Mammary epithelial cell (primary cell): ENCODE measurements at regions of chr1 and their contacts with region 1.

Region 1: GRCh38 chr1:76154206-76154956 is 79.8 kb downstream of the ST6GALNAC3 start:
- DNase-seq: peak; percentile 55
- H3K4me3 ChIP-seq: peak overlapping the region in 2 of 3 experiments; percentile 33 to 41
- H3K27ac ChIP-seq: no peak overlapping the region
- H3K4me1 ChIP-seq: peaks cover 4% of the 10 kb centered on the region
- H3K27me3 ChIP-seq: no peaks in the 10 kb centered on the region
- CTCF ChIP-seq: peak; percentile 97 to 98

Region 2: DNA sequence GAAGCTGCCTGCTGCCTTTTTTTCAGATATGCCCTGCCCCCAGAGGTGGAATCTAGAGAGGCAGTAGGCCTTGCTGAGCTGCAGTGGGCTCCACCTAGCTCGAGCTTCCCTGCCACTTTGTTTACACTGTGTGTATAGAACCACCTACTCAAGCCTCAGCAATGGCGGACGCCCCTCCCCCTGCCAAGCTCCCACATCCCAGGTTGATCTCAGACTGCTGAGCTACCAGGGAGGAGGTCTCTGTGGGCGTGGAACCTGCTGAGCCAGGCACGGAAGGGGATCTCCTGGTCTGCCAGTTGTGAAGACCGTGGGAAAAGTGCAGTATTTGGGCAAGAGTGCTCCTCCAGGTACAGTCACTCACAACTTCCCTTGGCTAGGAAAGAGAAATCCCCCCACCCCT is 292.6 kb before region 1 on chr1:
- CTCF ChIA-PET with region 1: no interaction called
- dilution Hi-C with region 1: no loop called
- in situ Hi-C with region 1: no loop called
- intact Hi-C with region 1: no loop called
- DNase-seq: peak; percentile 12
- H3K4me3 ChIP-seq: no peak overlapping the region
- H3K27ac ChIP-seq: no peak overlapping the region
- H3K4me1 ChIP-seq: no peaks in the 10 kb centered on the region
- H3K27me3 ChIP-seq: no peaks in the 10 kb centered on the region
- CTCF ChIP-seq: no peak

Region 3: DNA sequence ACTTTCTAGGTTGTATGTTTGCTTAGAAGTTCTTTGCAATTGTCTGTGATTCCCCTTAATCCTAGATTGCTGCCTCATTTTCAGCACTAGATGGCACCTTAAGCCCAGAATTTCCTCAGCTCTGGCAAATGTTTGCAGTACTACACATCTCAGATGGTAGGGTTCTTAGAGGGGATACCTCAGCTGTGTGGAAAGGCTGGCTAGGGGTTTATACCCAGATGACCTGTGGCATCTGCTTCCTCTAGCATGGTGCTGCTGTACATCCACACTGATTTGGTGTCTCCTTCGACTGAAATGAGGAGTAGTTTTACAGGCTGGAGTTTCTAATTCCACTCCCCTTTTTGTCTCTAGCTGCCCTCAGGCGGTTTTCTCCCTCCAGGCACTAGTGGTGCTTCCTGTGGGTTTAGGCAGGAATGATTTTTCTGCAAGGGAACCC is 245.6 kb before region 1 on chr1:
- CTCF ChIA-PET with region 1: no interaction called
- dilution Hi-C with region 1: no loop called
- in situ Hi-C with region 1: no loop called
- intact Hi-C with region 1: loop called (anchors 1 kb)
- DNase-seq: peak; percentile 53
- H3K4me3 ChIP-seq: no peak overlapping the region
- H3K27ac ChIP-seq: no peak overlapping the region
- H3K4me1 ChIP-seq: no peaks in the 10 kb centered on the region
- H3K27me3 ChIP-seq: no peaks in the 10 kb centered on the region
- CTCF ChIP-seq: peak; percentile 49 to 74

Region 4: DNA sequence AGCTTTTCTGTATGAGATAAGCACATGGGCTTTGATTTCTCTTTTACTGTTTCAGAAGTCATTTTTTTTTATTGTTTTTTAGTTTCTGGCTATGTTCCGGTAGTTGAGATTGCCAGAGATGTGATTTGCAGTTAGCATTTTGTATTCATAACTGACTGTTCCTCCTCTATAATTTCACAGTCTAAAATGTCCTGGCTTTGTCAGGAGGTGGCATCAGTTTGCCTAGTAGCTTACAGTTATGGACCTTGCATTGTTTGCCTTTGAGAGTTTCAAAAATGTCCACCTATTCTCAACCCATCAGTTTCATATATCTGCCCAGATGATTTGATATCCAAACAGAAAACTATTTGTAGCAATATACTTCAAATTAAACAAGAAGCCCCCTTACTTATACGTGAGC is 119.3 kb before region 1 on chr1:
- CTCF ChIA-PET with region 1: no interaction called
- dilution Hi-C with region 1: no loop called
- in situ Hi-C with region 1: no loop called
- intact Hi-C with region 1: loop called (anchors 10 kb)
- DNase-seq: no peak
- H3K4me3 ChIP-seq: no peak overlapping the region
- H3K27ac ChIP-seq: no peak overlapping the region
- H3K4me1 ChIP-seq: no peaks in the 10 kb centered on the region
- H3K27me3 ChIP-seq: peaks cover 1% of the 10 kb centered on the region
- CTCF ChIP-seq: peak in 1 of 2 donors; percentile 38

Region 5: GRCh38 chr1:76219366-76219818 is 65.0 kb after region 1 on chr1:
- CTCF ChIA-PET with region 1: no interaction called
- dilution Hi-C with region 1: no loop called
- in situ Hi-C with region 1: no loop called
- intact Hi-C with region 1: no loop called
- DNase-seq: no peak
- H3K4me3 ChIP-seq: no peak overlapping the region
- H3K27ac ChIP-seq: no peak overlapping the region
- H3K4me1 ChIP-seq: no peaks in the 10 kb centered on the region
- H3K27me3 ChIP-seq: no peaks in the 10 kb centered on the region
- CTCF ChIP-seq: no peak

Region 6: GRCh38 chr1:76379506-76379905 is 225.1 kb after region 1 on chr1:
- CTCF ChIA-PET with region 1: no interaction called
- dilution Hi-C with region 1: no loop called
- in situ Hi-C with region 1: no loop called
- intact Hi-C with region 1: loop called (anchors 5 kb)
- DNase-seq: no peak
- H3K4me3 ChIP-seq: no peak overlapping the region
- H3K27ac ChIP-seq: no peak overlapping the region
- H3K4me1 ChIP-seq: no peaks in the 10 kb centered on the region
- H3K27me3 ChIP-seq: no peaks in the 10 kb centered on the region
- CTCF ChIP-seq: no peak

Region 7: GRCh38 chr1:77126307-77126706 is 971.9 kb after region 1 on chr1:
- CTCF ChIA-PET with region 1: no interaction called
- dilution Hi-C with region 1: no loop called
- in situ Hi-C with region 1: loop called in 1 of 2 experiments (anchors 25 kb)
- intact Hi-C with region 1: loop called (anchors 1 kb)
- DNase-seq: peak; percentile 51
- H3K4me3 ChIP-seq: no peak overlapping the region
- H3K27ac ChIP-seq: no peak overlapping the region
- H3K4me1 ChIP-seq: no peaks in the 10 kb centered on the region
- H3K27me3 ChIP-seq: no peaks in the 10 kb centered on the region
- CTCF ChIP-seq: peak; percentile 61 to 76